Activated CD4-positive, alpha-beta memory T cell treated with anti-CD3 and anti-CD28 coated beads for 36 hours (primary cell): ENCODE measurements at regions of chr19 and their contacts with region 1.

Region 1: DNA sequence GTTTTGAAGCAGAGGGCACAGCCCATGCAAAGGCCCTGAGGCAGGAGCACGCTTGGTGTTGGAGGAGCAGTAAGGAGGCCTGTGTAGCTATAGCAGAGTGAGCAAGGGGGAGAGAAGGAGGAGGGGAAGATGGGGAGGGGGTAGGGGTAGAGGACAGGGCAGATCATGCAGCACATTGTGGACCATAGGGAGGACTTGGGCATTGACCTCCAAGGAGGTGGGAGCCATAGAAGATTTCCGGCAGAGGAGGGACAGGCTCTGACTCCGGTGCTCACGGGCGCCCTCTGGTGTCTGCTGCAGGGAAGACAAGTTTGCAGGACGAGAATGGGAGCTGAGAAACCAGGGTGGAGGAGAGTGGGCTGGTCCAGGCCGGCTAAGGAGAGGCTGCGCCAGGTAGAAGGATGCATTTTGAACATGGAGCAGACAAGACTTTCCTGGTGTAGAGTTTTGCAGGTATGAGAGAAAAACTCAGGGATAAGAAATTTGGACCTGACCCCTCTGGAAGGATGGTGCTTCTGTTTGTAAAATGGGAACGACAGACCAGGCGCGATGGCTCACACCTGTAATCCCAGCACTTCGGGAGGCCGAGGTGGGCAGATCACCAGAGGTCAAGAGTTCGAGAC is 13.7 kb upstream of the CREB3L3 start:
- DNase-seq: peak; percentile 93
- H3K4me3 Mint-ChIP-seq: peak overlapping the region; percentile 9
- H3K27ac Mint-ChIP-seq: peak overlapping the region; percentile 3
- H3K4me1 Mint-ChIP-seq: peaks cover 8% of the 10 kb centered on the region
- H3K27me3 Mint-ChIP-seq: peaks cover 2% of the 10 kb centered on the region

Region 2: DNA sequence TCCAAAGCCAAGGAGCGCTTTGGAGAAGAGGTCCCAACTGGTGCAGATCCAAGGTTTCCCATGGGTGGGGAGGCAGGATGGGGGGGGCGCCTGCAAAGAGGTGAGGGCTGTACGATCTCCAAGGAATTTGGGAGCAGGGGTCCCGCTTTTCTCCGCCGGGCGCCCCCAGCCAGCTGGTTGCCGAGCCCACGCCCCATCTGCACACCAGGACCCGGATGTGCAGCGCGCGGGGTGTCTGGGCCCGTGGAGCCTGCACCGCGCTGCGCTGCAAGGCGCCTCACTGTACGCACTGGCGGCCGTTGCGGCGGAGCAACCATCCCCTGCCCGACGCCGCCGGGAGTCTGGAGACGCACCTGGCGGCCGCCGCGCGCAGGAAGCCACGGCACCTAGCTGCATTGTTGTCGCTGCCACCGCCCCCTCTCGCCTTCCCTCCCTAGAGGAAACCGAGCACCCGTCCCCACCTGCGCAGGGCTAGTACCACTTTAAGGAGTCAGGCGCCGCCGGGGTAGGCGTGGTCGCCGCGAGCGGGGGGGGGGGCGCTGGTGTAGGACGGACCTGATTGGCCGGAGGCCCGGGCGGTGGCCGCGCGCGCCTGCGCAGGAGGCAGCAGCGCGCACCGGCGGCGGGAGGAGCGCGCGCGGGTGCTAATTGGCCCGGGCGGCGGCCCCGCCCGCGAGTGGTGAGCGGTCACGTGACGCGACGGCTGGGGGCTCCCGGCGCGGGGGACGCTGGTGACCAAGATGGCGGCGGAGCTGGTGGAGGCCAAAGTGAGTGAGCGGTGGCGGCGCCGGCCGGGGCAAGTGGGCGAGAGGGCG is 132.5 kb before region 1 on chr19 and contains the start of gene PIAS4:
- CTCF ChIA-PET with region 1: interaction called, 11 read pairs
- POLR2A ChIA-PET with region 1: no interaction called
- intact Hi-C with region 1: no loop called
- DNase-seq: peak; percentile 96
- H3K4me3 Mint-ChIP-seq: peak within 1 kb of the TSS; percentile 83
- H3K27ac Mint-ChIP-seq: peak within 1 kb of the TSS; percentile 5
- H3K4me1 Mint-ChIP-seq: peaks cover 27% of the 10 kb centered on the region
- H3K27me3 Mint-ChIP-seq: no peaks in the 10 kb centered on the region
- total RNA-seq, gene PIAS4: 22.5 to 24.4 TPM

Region 3: DNA sequence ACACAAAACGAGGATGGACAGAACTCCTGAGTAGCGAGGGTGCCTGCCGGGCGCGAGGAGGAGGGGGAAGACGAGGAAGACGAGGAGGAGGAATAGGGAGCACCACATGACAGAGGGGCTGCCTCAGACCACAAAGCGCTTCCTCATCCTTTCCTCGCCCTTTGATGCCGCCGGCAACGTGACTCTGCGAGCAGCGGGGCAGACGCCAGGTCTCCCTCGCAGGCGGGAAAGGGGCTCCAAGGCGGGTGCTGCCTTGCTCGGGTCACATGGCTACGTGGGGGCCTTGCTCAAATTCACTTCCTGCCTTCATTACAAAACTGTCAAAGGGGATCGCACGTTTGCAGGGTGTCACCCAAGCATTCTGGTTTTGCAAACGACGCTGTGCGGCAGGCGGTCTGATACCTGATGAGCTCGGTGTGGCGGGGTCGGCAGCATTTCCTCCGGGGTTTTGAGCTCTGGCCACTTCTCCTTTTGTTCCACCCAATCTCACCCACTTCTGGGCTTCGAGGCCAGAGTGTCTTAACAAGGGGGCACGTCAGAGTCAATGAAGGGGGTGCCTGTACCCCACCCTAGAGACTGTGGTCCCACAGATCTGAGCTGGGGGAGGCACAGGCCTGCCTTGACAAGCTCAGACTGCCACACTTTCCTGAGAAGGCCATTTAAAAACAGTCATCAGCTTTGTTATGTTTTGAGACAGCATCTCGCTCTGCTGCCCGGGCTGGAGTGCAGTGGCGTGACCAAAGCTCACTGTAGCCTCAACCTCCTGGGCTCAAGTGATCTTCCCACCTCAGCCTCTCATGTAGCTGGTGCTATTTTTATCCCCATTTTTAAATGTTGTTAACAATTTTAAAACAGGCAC is 30.7 kb before region 1 on chr19:
- CTCF ChIA-PET with region 1: interaction called, 16 read pairs
- POLR2A ChIA-PET with region 1: no interaction called
- intact Hi-C with region 1: no loop called
- DNase-seq: peak; percentile 70
- H3K4me3 Mint-ChIP-seq: peak overlapping the region; percentile 12
- H3K27ac Mint-ChIP-seq: peak overlapping the region; percentile 90
- H3K4me1 Mint-ChIP-seq: peaks cover 41% of the 10 kb centered on the region
- H3K27me3 Mint-ChIP-seq: no peaks in the 10 kb centered on the region

Region 4: DNA sequence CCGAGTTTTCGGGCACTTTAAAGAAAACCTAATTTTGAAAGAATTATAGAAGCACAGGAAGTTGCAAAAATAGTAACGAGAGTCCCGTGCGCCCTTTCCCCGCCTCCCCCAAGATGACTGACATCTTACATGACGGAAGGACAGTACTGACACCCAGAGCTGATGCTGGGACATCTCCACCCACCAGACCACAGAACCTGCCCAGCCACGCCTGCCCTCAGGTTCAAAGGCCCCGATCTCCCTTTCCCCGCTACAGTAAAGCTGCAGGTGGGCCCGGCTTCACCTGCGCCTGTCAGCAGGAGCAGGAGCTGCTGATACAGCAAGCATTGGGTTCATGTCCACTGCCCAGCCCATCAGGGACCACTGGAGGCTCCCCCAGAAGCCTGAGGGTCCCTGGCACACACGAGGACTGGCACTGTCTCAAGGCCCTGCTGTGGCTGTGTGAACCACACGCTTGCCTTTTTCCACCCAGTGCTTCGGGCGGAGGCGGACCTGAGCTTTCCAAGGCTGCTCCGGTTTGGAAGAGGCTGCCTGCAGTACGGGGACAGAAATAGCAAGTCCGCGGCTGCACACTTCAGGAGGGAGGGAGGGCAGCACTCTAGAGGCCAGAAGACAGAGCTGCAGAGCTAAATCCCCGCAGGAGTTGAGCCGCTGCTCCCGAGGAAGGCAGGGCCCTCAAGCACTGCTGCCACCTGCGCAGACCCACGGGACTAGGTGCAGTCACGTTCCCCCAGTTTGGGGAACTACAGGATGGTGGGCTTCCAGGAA is 24.5 kb before region 1 on chr19:
- CTCF ChIA-PET with region 1: interaction called, 16 read pairs
- POLR2A ChIA-PET with region 1: no interaction called
- intact Hi-C with region 1: no loop called
- DNase-seq: peak; percentile 79
- H3K4me3 Mint-ChIP-seq: no peak overlapping the region
- H3K27ac Mint-ChIP-seq: peak overlapping the region; percentile 65
- H3K4me1 Mint-ChIP-seq: peaks cover 20% of the 10 kb centered on the region
- H3K27me3 Mint-ChIP-seq: no peaks in the 10 kb centered on the region

Region 5: DNA sequence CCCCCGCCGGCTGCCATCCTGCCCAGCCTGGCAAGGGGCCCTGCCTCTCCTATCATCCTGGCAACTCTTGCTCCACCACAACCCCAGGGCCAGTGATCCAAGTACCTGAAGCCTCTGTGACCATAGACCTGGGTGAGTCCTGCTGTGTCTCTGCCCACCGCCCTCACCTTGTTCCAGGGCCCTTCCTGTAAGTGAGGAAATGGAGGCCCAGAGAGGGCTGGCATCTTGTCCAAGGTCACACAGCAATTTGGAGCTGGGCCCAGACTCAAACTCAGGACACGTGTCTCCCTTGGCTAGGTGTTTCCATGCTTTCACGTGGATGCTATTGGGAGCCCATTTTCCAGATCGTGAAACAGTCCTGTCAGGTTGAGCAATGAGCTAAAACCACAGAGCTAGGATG is 17.4 kb after region 1 on chr19:
- CTCF ChIA-PET with region 1: interaction called, 16 read pairs
- POLR2A ChIA-PET with region 1: no interaction called
- intact Hi-C with region 1: no loop called
- DNase-seq: no peak
- H3K4me3 Mint-ChIP-seq: no peak overlapping the region
- H3K27ac Mint-ChIP-seq: no peak overlapping the region
- H3K4me1 Mint-ChIP-seq: peaks cover 5% of the 10 kb centered on the region
- H3K27me3 Mint-ChIP-seq: peaks cover 2% of the 10 kb centered on the region

Region 6: GRCh38 chr19:4199699-4200293 is 60.1 kb after region 1 on chr19:
- CTCF ChIA-PET with region 1: interaction called, 21 read pairs
- POLR2A ChIA-PET with region 1: no interaction called
- intact Hi-C with region 1: loop called (anchors 5 kb)
- DNase-seq: no peak
- H3K4me3 Mint-ChIP-seq: no peak overlapping the region
- H3K27ac Mint-ChIP-seq: no peak overlapping the region
- H3K4me1 Mint-ChIP-seq: peaks cover 9% of the 10 kb centered on the region
- H3K27me3 Mint-ChIP-seq: peaks cover 33% of the 10 kb centered on the region

Region 7: GRCh38 chr19:4208385-4209094 is 68.8 kb after region 1 on chr19:
- CTCF ChIA-PET with region 1: interaction called, 21 read pairs
- POLR2A ChIA-PET with region 1: no interaction called
- intact Hi-C with region 1: loop called (anchors 5 kb)
- DNase-seq: no peak
- H3K4me3 Mint-ChIP-seq: no peak overlapping the region
- H3K27ac Mint-ChIP-seq: no peak overlapping the region
- H3K4me1 Mint-ChIP-seq: no peaks in the 10 kb centered on the region
- H3K27me3 Mint-ChIP-seq: no peaks in the 10 kb centered on the region